IMR-90 (cell line): ENCODE measurements at regions of chr10 and their contacts with region 1.

Region 1: DNA sequence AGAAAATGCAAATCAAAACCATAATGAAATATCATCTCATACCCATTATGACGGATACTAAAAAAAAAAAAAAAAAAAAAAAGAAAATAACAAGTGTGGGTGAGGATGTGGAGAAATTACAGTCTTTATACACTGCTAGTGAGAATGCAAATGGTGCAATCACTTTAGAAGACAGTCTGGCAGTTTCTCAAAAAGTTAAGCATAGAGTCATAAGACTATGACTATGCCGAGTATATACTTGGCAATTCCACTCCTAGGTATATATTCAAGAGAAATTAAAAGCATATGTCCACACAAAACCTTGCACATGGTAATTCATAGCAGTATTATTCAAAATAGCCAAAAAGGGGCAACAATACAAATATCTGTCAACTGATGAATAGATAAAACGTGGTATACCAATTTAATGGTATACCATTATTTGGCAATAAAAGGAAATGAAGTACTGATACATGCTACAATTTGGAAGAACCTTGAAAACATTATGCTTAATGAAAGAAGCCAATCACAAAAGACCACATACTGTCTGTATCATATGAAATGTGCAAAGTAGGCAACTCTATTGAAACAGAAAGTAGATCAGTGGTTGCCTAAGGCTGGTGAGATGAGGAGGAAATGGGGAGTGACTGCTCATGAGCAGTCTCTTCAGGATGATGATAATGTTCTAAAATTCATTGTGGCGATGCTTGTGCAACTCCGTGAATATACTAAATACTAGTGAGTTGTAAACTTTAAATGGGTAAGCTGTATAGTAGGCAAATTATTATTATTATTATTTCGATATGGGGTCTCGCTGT is 90.1 kb upstream of the NANOS1 start:
- DNase-seq: no peak
- ATAC-seq: peak; percentile 24; the same call in 1 of the 2 replicates
- H3K4me3 ChIP-seq: no peak overlapping the region
- H3K27ac ChIP-seq: no peak overlapping the region
- H3K4me1 ChIP-seq: no peaks in the 10 kb centered on the region; the same call in 1 of the 2 replicates
- H3K27me3 ChIP-seq: peaks cover 2% of the 10 kb centered on the region; the same call in 1 of the 2 replicates
- CTCF ChIP-seq: no peak
- POLR2A ChIP-seq: no peak
- RAD21 ChIP-seq: no peak

Region 2: GRCh38 chr10:119061352-119061751 is 121.9 kb after region 1 on chr10:
- CTCF ChIA-PET with region 1: no interaction called
- POLR2A ChIA-PET with region 1: no interaction called
- dilution Hi-C with region 1: no loop called
- in situ Hi-C with region 1: no loop called
- intact Hi-C with region 1: no loop called
- DNase-seq: no peak
- ATAC-seq: no peak
- H3K4me3 ChIP-seq: no peak overlapping the region
- H3K27ac ChIP-seq: no peak overlapping the region
- H3K4me1 ChIP-seq: no peaks in the 10 kb centered on the region
- H3K27me3 ChIP-seq: no peaks in the 10 kb centered on the region
- CTCF ChIP-seq: no peak
- POLR2A ChIP-seq: no peak
- RAD21 ChIP-seq: no peak

Region 3: GRCh38 chr10:120671491-120671890 is 1732.1 kb after region 1 on chr10:
- CTCF ChIA-PET with region 1: no interaction called
- POLR2A ChIA-PET with region 1: no interaction called
- dilution Hi-C with region 1: no loop called
- in situ Hi-C with region 1: no loop called
- intact Hi-C with region 1: loop called (anchors 10 kb)
- DNase-seq: no peak
- ATAC-seq: no peak
- H3K4me3 ChIP-seq: no peak overlapping the region
- H3K27ac ChIP-seq: no peak overlapping the region
- H3K4me1 ChIP-seq: no peaks in the 10 kb centered on the region
- H3K27me3 ChIP-seq: no peaks in the 10 kb centered on the region
- CTCF ChIP-seq: no peak
- POLR2A ChIP-seq: no peak
- RAD21 ChIP-seq: no peak